ENCODE measurements at regions of chr6 and their contacts with region 1.

Region 1: GRCh38 chr6:87799651-87800050 is 97.6 kb upstream of the AKIRIN2 start:
- DNase-seq: no peak
- ATAC-seq: no peak
- H3K4me3 ChIP-seq: no peak overlapping the region
- H3K27ac ChIP-seq: no peak overlapping the region
- H3K4me1 ChIP-seq: peaks cover 0 to 4% (median 0%) of the 10 kb centered on the region in 9 donors
- H3K27me3 ChIP-seq: no peaks in the 10 kb centered on the region
- CTCF ChIP-seq: no peak

Region 2: DNA sequence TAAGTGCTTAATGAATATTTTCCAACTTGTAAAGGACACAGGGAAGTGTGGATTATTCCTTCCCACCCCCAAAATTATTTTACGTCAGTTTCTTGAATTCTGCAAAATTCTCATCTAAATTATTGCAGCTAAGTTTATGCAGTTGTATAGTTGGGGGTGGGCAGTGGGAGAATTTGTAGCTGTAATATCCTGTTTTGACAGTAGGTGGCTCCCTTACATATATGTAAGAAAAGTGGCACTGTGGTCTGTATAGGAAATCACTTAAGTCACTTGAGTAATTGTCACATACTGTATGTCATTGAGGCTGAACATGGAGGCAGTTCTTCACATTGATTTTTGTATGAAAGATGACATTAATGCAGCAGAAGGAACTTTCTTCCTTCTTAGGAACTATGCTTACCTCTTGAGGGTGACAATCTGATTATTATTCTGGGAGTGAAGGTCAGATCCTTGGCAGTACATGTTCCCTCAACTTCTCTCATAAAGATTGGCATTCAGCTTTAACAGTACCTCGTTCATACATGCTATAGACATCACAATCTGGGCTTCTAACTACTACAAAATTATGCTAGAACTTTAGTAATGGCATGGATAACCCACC is 406.5 kb before region 1 on chr6:
- intact Hi-C with region 1: loop called in 1 of 10 experiments (anchors 10 kb)
- DNase-seq: peak in 1 of 2 donors; percentile 30
- ATAC-seq: peak in 6 of 8 donors; percentile 64 to 83 (median 78)
- H3K4me3 ChIP-seq: no peak overlapping the region
- H3K27ac ChIP-seq: no peak overlapping the region
- H3K4me1 ChIP-seq: peaks cover 0 to 3% (median 0%) of the 10 kb centered on the region in 9 donors
- H3K27me3 ChIP-seq: no peaks in the 10 kb centered on the region
- CTCF ChIP-seq: peak; percentile 58 to 82 (median 77)

Region 3: GRCh38 chr6:87600576-87600975 is 199.1 kb before region 1 on chr6:
- intact Hi-C with region 1: loop called in 1 of 10 experiments (anchors 10 kb)
- DNase-seq: no peak
- ATAC-seq: no peak
- H3K4me3 ChIP-seq: no peak overlapping the region
- H3K27ac ChIP-seq: no peak overlapping the region
- H3K4me1 ChIP-seq: peaks cover 0 to 3% (median 0%) of the 10 kb centered on the region in 9 donors
- H3K27me3 ChIP-seq: no peaks in the 10 kb centered on the region
- CTCF ChIP-seq: no peak

Region 4: GRCh38 chr6:87701676-87702588 is 97.7 kb before region 1 on chr6 and contains the start of gene AKIRIN2:
- intact Hi-C with region 1: loop called in 1 of 10 experiments (anchors 10 kb)
- DNase-seq: peak; percentile 96 to 97
- ATAC-seq: peak; percentile 94 to 98 (median 96)
- H3K4me3 ChIP-seq: peak within 1 kb of the TSS; percentile 77 to 99 (median 94)
- H3K27ac ChIP-seq: peak within 1 kb of the TSS; percentile 90 to 99 (median 98)
- H3K4me1 ChIP-seq: peaks cover 0 to 45% (median 34%) of the 10 kb centered on the region in 9 donors
- H3K27me3 ChIP-seq: no peaks in the 10 kb centered on the region
- CTCF ChIP-seq: no peak
- total RNA-seq, gene AKIRIN2: 33.9 to 56.0 (median 43.8) TPM

Region 5: DNA sequence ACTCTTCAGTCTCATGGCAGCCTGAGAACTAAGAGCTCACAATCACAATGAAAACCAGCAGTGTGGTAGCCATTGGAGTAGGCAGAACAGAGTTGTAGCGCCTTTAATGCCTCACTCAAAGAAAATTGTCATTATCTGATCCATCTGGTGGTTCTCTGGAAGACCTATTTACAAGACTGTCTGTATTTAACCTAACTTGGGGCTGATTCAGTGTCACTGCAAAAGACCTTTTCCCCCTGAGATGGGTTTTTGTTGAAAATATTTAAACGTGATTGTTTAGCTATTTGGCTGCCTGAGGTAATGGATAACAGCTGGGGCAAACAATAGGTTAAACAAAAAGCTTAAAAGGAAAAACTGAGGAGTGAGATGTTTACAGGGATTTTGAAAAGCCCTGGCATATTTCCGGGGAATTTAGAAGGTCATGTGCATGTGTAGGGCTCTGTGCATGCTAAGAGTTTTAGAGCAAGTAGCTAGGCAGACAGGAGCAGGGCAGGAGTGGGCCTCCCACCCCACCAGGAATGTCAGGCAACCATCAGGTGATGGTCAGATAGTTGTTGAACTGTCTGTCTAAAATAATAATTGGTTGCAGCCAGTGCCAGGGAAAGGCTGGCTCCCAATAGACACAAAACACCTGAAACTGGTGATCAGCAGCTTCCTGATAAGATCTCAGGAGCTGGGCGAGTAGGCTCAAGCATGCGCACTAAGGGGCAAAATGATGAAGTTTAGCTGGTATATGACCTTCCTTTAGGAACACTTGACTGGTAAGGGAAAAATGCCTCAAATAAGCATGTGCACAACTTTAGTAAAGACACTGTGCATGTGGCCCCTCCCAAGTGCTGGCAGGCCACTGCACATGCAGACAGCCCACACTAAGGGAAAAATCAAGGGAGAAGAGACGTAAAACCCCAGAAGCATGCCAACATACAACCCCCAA is 26.8 kb before region 1 on chr6:
- intact Hi-C with region 1: no loop called
- DNase-seq: no peak
- ATAC-seq: no peak
- H3K4me3 ChIP-seq: no peak overlapping the region
- H3K27ac ChIP-seq: no peak overlapping the region
- H3K4me1 ChIP-seq: peaks cover 0 to 10% (median 0%) of the 10 kb centered on the region in 9 donors
- H3K27me3 ChIP-seq: no peaks in the 10 kb centered on the region
- CTCF ChIP-seq: no peak